ENCODE measurements at regions of chr1 and their contacts with region 1.

Region 1: DNA sequence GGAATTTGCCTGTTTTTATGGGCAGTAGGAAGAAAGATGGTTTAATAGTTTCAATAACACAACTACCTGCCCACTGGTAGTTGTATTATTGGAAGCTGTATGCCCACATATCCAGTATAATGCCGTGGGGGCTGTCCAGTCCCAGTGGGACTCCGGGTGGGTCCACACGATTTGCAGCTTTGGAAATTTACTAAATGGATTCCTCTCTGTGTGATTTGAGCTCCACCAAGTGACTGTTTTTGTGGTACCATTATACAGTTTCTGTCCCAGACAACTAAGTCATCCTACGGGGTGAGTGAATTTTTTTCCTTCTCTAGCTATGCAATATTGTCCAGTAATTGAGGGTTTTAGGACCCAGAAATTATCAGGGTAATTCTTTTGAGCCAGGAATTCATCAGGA is 86.8 kb downstream of the PLA2G4A start:
- DNase-seq: no peak
- H3K4me3 ChIP-seq: no peak overlapping the region
- CTCF ChIP-seq: no peak

Region 2: GRCh38 chr1:186927884-186928283 is 12.3 kb after region 1 on chr1:
- CTCF ChIA-PET with region 1: interaction called, 36 read pairs
- POLR2A ChIA-PET with region 1: no interaction called
- DNase-seq: no peak
- H3K4me3 ChIP-seq: no peak overlapping the region
- CTCF ChIP-seq: no peak

Measured in AG04449 (cell line).